Activated CD4-positive, alpha-beta memory T cell treated with anti-CD3 and anti-CD28 coated beads for 36 hours (primary cell): ENCODE measurements at regions of chr3 and their contacts with region 1.

Region 1: DNA sequence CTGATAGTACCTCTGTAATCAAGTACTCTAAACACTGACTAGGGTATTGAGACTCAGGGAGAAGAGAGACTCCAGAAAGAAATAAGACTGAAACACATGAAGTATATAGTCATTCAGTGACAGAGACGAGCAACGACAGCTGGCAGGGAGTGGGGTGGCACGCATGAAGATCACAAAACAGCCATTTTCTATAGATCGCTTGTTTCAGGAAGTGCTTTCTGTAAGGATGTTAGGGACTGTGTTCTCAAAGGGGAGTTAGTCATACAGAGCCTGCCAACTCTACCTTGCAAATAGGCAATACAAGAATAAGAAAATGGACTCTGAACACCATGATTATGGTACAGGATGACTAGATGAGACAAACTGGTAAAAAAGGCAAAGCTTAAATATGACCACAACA is 139.5 kb downstream of the TBL1XR1 start:
- DNase-seq: peak; percentile 80
- H3K4me3 Mint-ChIP-seq: no peak overlapping the region
- H3K27ac Mint-ChIP-seq: no peak overlapping the region
- H3K4me1 Mint-ChIP-seq: peaks cover 39% of the 10 kb centered on the region
- H3K27me3 Mint-ChIP-seq: no peaks in the 10 kb centered on the region

Region 2: DNA sequence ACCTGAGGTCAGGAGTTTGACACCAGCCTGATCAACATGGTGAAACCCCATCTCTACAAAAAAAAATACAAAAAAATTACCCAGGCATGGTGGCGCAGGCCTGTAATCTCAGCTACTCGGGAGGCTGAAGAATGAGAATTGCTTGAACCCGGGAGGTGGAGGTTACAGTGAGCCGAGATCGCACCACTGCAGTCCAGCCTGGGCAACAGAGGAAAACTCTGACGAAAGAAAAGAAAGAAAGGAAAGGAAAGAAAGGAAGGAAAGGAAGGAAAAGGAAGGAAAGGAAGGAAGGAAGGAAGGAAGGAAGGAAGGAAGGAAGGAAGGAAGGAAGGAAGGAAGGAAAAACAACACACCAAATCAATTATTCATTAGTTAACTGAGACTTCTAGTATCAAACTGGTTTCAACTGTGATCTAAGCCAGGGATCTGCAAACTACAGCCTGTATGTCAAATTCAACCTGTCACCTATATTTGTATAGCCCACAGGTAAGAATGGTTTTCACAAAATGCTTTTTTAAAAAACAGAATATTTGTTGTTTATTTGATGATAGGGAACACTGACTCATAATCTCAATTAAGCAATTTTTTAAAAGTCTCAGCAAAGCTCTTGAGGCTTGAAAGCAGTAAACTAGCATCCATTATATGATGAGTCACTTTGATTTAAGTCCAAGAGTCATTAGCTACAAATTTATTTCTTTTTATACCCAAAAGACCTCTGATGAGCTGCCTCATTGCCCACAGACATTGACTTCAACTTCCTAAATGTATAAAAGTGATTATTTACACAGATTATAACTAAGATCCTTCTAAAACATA is 12.0 kb after region 1 on chr3:
- CTCF ChIA-PET with region 1: no interaction called
- POLR2A ChIA-PET with region 1: no interaction called
- intact Hi-C with region 1: loop called (anchors 2 kb)
- DNase-seq: no peak
- H3K4me3 Mint-ChIP-seq: no peak overlapping the region
- H3K27ac Mint-ChIP-seq: no peak overlapping the region
- H3K4me1 Mint-ChIP-seq: peaks cover 52% of the 10 kb centered on the region
- H3K27me3 Mint-ChIP-seq: no peaks in the 10 kb centered on the region

Region 3: GRCh38 chr3:177126015-177126773 is 68.4 kb after region 1 on chr3:
- CTCF ChIA-PET with region 1: no interaction called
- POLR2A ChIA-PET with region 1: no interaction called
- intact Hi-C with region 1: loop called (anchors 5 kb)
- DNase-seq: no peak
- H3K4me3 Mint-ChIP-seq: no peak overlapping the region
- H3K27ac Mint-ChIP-seq: no peak overlapping the region
- H3K4me1 Mint-ChIP-seq: peaks cover 70% of the 10 kb centered on the region
- H3K27me3 Mint-ChIP-seq: no peaks in the 10 kb centered on the region

Region 4: DNA sequence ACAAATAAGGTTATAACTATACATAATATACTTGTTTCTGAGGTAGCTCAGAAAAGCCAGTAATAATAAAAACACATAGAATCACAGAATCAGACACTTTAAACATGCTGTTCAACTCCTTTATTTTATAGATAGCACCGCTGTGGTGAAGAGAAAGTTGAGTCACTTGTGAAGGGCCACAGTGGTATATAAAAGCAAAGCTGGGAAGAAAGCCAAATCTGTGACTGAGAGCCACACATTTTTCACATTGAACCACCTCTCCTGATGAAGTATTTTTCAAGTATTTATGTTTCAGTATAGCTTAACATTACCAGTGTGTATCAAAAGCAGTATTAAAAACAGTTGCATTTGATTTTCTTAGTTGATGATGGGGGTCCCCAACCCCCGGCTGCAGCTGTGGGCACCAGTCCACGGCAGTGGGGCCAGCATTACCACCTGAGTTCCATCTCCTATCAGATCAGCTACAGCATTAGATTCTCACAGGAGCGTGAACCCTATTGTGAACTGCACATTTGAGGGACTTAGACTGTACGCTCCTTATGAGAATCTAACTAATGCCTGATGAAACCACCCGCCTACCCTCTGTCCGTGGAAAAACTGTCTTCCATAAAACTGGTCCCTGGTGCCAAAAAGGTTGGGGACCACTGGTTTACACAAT is 93.3 kb after region 1 on chr3:
- CTCF ChIA-PET with region 1: interaction called, 5 read pairs
- POLR2A ChIA-PET with region 1: interaction called, 3 read pairs
- intact Hi-C with region 1: loop called (anchors 1 kb)
- DNase-seq: peak; percentile 24
- H3K4me3 Mint-ChIP-seq: peak overlapping the region; percentile 28
- H3K27ac Mint-ChIP-seq: peak overlapping the region; percentile 44
- H3K4me1 Mint-ChIP-seq: peaks cover 50% of the 10 kb centered on the region
- H3K27me3 Mint-ChIP-seq: no peaks in the 10 kb centered on the region

Region 5: GRCh38 chr3:177777699-177778098 is 719.9 kb after region 1 on chr3:
- CTCF ChIA-PET with region 1: interaction called, 3 read pairs
- POLR2A ChIA-PET with region 1: no interaction called
- intact Hi-C with region 1: loop called (anchors 5 kb)
- DNase-seq: peak; percentile 61
- H3K4me3 Mint-ChIP-seq: no peak overlapping the region
- H3K27ac Mint-ChIP-seq: no peak overlapping the region
- H3K4me1 Mint-ChIP-seq: peaks cover 16% of the 10 kb centered on the region
- H3K27me3 Mint-ChIP-seq: no peaks in the 10 kb centered on the region